Posterior cingulate gyrus (tissue), 11 donors: ENCODE measurements at regions of chr3 and their contacts with region 1.

Region 1: DNA sequence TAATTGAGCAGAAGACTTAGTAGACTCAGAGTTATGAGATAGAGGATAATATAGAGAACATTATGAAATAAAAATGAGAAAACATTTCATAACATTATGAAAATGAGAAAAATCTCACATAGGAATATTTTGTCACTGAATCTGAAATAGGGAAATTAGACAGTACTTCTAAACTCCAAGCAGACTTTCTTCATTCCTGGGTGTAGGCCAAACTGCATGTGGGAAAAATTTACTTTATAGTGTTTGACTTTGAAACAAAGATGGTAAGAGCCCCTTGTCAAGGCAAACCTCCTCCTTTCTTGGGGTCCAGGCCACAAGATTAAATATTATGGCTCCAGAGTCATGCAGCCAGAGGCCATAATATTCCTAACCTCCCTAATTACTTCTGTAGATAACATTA is 6.7 kb upstream of the OR5H14 start:
- DNase-seq: no peak

Region 2: GRCh38 chr3:97662762-97663161 is 477.8 kb before region 1 on chr3:
- intact Hi-C with region 1: no loop called
- DNase-seq: no peak

Region 3: GRCh38 chr3:98182196-98182595 is 41.7 kb after region 1 on chr3:
- intact Hi-C with region 1: loop called (anchors 2 kb)
- DNase-seq: no peak